ENCODE measurements at regions of chr12 and their contacts with region 1.

Region 1: DNA sequence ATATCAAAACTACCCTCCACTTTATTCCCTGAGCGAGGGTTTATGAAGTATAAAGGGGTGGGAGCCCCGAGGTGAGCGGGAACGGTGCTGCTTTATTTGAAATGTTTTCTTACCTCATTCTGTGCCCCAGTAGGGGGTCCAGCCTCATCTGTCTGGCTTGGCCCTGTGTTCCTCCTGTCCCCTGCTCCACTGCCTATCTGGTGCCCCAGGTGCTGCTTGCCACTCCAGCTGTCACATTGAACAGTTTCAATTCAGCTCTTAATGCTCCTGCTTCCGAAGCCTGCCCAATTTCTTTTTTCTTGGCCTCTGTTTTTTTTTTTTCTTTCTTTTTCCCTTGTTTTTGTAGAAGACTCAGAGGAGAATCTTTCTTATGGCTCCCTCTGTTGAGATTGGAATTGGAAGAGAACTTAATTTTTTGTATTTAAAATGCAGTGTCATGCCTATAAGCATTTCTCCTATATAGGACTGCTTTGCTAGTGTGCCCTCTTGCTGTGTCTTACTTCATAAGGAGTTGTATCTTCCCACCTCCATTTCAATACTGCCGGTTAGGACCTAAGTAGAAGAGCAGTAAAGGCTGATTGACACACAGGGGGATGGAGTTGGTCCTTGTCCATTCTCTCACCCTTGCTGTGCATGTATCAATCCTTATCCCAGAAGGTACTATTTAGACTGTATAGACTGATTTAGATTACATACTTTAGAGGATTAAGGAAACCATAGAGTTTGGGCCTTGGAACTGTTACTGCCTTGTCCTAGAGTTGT is 2.3 kb downstream of the ATXN7L3B start:
- DNase-seq: no peak
- ATAC-seq: no peak
- H3K4me3 Mint-ChIP-seq: peak overlapping the region; percentile 93
- H3K27ac Mint-ChIP-seq: peak overlapping the region; percentile 98
- H3K4me1 Mint-ChIP-seq: peaks cover 41% of the 10 kb centered on the region
- H3K27me3 Mint-ChIP-seq: no peaks in the 10 kb centered on the region
- CTCF ChIP-seq: no peak

Region 2: DNA sequence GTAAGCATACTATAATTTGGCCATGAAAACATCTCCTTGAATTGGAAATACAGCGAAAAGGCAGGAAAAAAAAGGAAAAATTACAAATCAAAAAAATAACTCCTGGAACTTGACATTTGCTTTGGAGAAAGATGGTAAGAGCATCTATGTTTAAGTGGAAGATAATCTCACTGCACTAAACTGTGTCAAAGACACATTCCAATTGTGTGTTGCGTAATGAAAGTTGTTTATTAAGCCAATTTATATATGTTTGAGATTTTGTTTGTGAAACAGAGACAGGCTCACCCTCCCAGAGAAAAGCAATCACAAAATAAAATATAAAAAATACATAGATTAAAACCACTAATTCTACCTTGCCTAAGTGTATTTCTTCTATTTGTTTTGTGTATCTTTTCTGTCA is 13.4 kb before region 1 on chr12:
- CTCF ChIA-PET with region 1: no interaction called
- POLR2A ChIA-PET with region 1: no interaction called
- intact Hi-C with region 1: no loop called
- DNase-seq: no peak
- ATAC-seq: no peak
- H3K4me3 Mint-ChIP-seq: no peak overlapping the region
- H3K27ac Mint-ChIP-seq: no peak overlapping the region
- H3K4me1 Mint-ChIP-seq: no peaks in the 10 kb centered on the region
- H3K27me3 Mint-ChIP-seq: peaks cover 12% of the 10 kb centered on the region
- CTCF ChIP-seq: no peak

Region 3: GRCh38 chr12:74552201-74552600 is 12.3 kb after region 1 on chr12:
- CTCF ChIA-PET with region 1: interaction called, 4 read pairs
- POLR2A ChIA-PET with region 1: interaction called, 5 read pairs
- intact Hi-C with region 1: loop called (anchors 2 kb)
- DNase-seq: no peak
- ATAC-seq: no peak
- H3K4me3 Mint-ChIP-seq: no peak overlapping the region
- H3K27ac Mint-ChIP-seq: no peak overlapping the region
- H3K4me1 Mint-ChIP-seq: no peaks in the 10 kb centered on the region
- H3K27me3 Mint-ChIP-seq: peaks cover 3% of the 10 kb centered on the region
- CTCF ChIP-seq: no peak